Activated CD4-positive, alpha-beta T cell treated with anti-CD3 and anti-CD28 coated beads, Interleukin-2, amount 10 ng/mL, durations not matched to agents 7 days and 5 days (primary cell): ENCODE measurements at regions of chr13 and their contacts with region 1.

Region 1: GRCh38 chr13:30114571-30115256 is 192.6 kb downstream of the KATNAL1 start:
- DNase-seq: peak; percentile 92
- H3K4me3 Mint-ChIP-seq: peak overlapping the region; percentile 71
- H3K27ac Mint-ChIP-seq: peak overlapping the region; percentile 68
- H3K4me1 Mint-ChIP-seq: peaks cover 48% of the 10 kb centered on the region
- H3K27me3 Mint-ChIP-seq: peaks cover 4% of the 10 kb centered on the region

Region 2: DNA sequence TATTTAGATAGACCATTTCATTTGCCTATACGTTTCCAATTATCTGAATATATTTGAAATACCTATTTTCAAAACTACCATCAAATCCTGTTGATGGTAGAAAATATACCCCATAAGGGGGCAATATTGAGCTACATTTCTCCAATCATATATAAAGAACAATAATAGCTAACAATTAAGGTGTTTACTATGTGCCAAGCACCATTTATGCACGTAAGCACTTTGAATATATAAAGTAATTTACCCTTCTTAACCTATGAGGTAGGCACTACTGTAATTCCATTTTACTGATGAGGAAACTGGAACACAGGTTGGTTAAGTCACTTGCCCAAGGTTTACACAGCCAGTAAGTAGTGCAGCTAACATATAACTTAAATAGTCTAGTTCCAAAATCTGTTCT is 343.5 kb before region 1 on chr13:
- CTCF ChIA-PET with region 1: interaction called, 25 read pairs
- POLR2A ChIA-PET with region 1: no interaction called
- DNase-seq: no peak
- H3K4me3 Mint-ChIP-seq: no peak overlapping the region
- H3K27ac Mint-ChIP-seq: no peak overlapping the region
- H3K4me1 Mint-ChIP-seq: no peaks in the 10 kb centered on the region
- H3K27me3 Mint-ChIP-seq: no peaks in the 10 kb centered on the region

Region 3: DNA sequence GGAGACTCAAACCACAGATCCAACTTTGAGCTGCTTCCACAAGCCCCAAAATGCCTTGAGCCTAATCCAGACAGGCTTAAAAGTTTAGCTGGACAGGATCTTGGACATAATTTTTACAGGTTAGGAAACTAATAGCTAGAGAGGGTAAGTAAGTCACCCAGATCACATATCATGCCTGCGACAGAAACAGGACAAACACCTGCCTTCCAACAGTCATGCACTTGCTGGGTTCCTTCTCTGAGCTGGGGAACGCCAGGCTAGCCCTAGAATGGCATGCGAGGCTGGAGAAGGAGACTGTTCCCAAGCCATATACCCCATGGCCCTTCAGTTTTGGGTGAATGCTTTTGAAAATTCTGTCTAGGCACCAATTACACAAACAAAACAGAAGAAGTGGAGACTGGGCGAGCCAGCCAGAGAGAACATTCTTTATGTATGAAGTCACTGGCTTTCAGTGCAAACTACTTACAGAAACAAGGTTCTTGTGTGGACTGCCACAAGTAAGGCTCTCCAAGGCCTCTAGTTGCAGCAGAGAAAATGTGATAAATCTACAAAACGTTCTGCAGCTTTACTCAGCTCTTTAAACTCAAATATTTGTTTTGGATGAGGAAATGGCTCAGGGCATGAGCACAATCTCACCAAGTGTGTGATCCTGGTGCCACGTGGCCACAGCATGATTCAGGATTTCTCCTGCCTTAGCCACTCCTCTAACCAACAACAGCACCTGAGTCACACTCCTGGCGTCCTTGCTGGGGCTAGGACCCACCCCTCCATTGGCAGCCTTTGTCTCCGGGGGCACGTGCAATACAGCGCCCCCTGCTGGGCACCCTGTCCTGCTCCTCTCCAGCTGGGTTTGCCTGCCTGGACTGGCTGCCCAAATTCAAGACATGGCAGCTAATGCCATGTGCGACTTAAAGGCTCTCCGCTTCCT is 190.9 kb before region 1 on chr13:
- CTCF ChIA-PET with region 1: interaction called, 15 read pairs
- POLR2A ChIA-PET with region 1: no interaction called
- DNase-seq: peak; percentile 20
- H3K4me3 Mint-ChIP-seq: no peak overlapping the region
- H3K27ac Mint-ChIP-seq: no peak overlapping the region
- H3K4me1 Mint-ChIP-seq: peaks cover 42% of the 10 kb centered on the region
- H3K27me3 Mint-ChIP-seq: peaks cover 2% of the 10 kb centered on the region

Region 4: GRCh38 chr13:30052120-30052519 is 62.6 kb before region 1 on chr13:
- CTCF ChIA-PET with region 1: no interaction called
- POLR2A ChIA-PET with region 1: no interaction called
- DNase-seq: no peak
- H3K4me3 Mint-ChIP-seq: no peak overlapping the region
- H3K27ac Mint-ChIP-seq: peak overlapping the region; percentile 37
- H3K4me1 Mint-ChIP-seq: peaks cover 22% of the 10 kb centered on the region
- H3K27me3 Mint-ChIP-seq: peaks cover 10% of the 10 kb centered on the region

Region 5: DNA sequence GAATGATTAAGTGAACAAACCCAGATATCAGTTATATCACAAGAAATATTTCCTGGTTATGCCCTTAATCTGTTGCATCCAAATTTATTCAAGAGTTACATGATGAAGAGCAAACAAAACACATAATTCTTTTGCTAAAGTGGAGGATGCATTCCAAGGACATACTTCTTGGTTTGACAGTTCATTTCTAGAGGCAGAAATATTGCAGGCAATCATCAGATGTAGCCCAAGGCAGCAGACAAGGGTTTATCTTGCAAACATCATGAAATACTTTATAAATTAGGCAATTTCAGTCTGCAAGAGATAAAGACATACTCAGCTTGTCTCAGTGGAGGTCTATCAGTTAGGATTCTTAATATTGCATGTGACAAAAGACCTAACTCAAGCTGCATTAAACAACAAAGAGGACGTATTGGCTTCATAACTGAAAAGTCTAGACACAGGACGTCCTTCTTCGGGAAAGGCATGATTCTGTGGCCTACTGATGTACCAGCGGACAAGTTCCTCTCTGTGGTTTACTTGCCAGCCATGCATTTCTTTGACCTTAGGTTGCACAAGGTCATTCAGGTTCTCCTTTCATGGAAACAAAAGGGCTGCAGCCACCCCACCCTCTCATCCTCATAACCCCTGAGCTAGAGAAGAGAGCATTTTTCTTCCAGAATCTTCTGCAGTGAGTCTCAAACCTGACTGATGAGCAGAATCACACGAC is 11.4 kb before region 1 on chr13:
- CTCF ChIA-PET with region 1: interaction called, 11 read pairs
- POLR2A ChIA-PET with region 1: no interaction called
- DNase-seq: no peak
- H3K4me3 Mint-ChIP-seq: no peak overlapping the region
- H3K27ac Mint-ChIP-seq: no peak overlapping the region
- H3K4me1 Mint-ChIP-seq: no peaks in the 10 kb centered on the region
- H3K27me3 Mint-ChIP-seq: peaks cover 5% of the 10 kb centered on the region

Region 6: GRCh38 chr13:30142486-30143211 is 27.9 kb after region 1 on chr13:
- CTCF ChIA-PET with region 1: interaction called, 17 read pairs
- POLR2A ChIA-PET with region 1: no interaction called
- DNase-seq: no peak
- H3K4me3 Mint-ChIP-seq: no peak overlapping the region
- H3K27ac Mint-ChIP-seq: peak overlapping the region; percentile 81
- H3K4me1 Mint-ChIP-seq: peaks cover 60% of the 10 kb centered on the region
- H3K27me3 Mint-ChIP-seq: no peaks in the 10 kb centered on the region